ENCODE measurements at regions of chr11 and their contacts with region 1.

Region 1: DNA sequence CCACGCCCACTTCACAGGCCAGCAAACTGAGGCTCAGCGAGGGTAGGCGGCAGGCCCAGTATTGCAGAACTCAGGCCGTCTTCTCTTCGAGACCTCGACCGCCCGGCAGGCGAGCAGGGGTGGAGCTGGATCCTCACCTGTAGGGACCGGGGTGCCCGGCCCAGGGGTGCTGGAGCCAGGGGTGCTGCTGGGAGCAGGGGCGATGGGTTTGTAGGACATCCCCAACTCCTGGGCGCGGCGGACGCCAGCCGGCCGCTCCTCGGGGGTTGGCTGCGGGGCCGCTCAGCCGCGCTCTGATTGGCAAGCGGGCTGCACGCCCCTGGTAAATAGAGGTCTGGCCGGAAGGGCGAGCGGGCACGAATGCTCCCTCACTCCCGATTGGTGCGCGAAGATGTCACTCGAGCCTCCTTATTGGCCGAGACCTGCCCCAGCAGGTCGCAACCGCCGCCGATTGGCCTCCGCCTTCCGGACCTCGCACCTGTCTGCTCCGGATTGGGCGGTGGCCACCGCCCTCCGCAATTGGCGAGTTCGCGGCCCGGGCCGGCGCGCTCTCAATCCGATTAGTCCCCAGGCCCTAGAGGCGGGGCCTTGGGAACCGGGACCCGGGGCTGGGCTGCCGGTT is at the start of gene CDK2AP2:
- DNase-seq: peak; percentile 100
- ATAC-seq: peak; percentile 82
- H3K4me3 ChIP-seq: peak within 1 kb of the TSS; percentile 88
- H3K27ac ChIP-seq: peak within 1 kb of the TSS; percentile 69
- H3K4me1 ChIP-seq: peaks cover 14% of the 10 kb centered on the region
- H3K27me3 ChIP-seq: 0 out of 2 replicates have a peak, but pooled peaks cover 2% of the 10 kb centered on the region
- CTCF ChIP-seq: no peak
- POLR2A ChIP-seq: peak; percentile 28; the same call in 1 of the 2 replicates
- RAD21 ChIP-seq: no peak
- total RNA-seq, gene CDK2AP2: 8.1 and 9.2 TPM in 2 replicates

Region 2: DNA sequence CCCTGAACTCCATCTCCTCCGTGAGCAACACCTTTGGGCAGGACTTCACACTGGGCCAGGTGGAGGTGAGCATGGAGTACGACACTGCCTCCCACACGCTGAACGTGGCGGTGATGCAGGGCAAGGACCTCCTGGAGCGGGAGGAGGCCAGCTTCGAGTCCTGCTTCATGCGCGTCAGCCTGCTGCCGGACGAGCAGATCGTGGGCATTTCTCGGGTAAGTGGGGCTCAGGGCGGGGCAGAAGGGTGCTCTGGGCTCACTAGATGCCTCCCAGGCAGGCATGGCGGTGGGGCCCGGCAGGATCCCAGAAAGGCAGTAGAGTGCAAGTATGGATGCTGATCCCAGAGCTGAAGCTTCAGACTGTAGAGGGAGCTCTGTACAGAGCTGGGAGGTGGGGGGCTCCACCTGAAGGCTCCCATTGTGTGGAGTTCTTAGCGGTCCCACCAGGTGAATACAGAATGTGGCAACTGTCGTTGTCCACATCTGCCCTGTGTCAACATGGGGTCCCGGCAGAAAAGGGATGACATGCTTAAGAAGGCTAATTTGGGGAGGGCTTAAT is 467.9 kb before region 1 on chr11:
- CTCF ChIA-PET with region 1: no interaction called
- POLR2A ChIA-PET with region 1: no interaction called
- dilution Hi-C with region 1: no loop called
- in situ Hi-C with region 1: no loop called
- intact Hi-C with region 1: no loop called
- DNase-seq: no peak
- ATAC-seq: no peak
- H3K4me3 ChIP-seq: no peak overlapping the region
- H3K27ac ChIP-seq: no peak overlapping the region
- H3K4me1 ChIP-seq: peaks cover 17% of the 10 kb centered on the region
- H3K27me3 ChIP-seq: peaks cover 12% of the 10 kb centered on the region
- CTCF ChIP-seq: no peak
- POLR2A ChIP-seq: no peak
- RAD21 ChIP-seq: no peak

Region 3: DNA sequence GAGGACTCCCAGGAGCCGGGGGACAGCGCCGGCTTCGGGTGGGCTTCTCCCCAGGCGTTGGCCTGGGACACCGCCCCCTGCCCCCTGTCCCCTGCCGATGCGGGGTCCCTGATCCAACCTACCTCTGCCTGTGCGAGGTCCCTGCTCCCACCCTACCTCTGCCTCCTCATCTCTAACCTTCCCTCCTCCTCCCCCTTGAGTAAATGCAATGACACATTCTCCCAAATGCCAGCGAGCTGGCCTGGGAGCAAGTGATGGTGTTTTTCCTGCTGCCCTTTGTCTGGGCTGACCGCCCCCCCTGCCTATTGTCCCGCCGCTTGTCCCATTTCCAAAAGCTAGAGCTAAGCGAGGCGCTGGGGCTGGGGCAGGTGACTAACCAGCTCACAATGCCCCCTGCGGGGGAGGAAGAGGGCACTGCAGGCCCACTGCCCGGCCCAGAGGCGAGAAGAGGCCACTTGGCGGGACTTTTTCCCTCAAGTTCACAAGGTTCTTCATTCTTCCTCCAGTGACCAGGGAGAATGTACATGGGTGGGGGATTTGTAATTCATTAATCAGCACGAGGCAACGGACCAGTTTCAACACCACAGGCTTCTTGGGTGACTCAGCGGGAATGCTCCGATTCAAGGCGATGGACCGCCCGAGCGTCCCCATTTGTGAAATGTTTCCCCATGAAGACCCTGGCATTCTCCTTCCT is 133.9 kb before region 1 on chr11:
- CTCF ChIA-PET with region 1: no interaction called
- POLR2A ChIA-PET with region 1: no interaction called
- dilution Hi-C with region 1: no loop called
- in situ Hi-C with region 1: no loop called
- intact Hi-C with region 1: no loop called
- DNase-seq: peak; percentile 96
- ATAC-seq: peak; percentile 31
- H3K4me3 ChIP-seq: peak overlapping the region; percentile 78
- H3K27ac ChIP-seq: peak overlapping the region; percentile 94
- H3K4me1 ChIP-seq: peaks cover 43% of the 10 kb centered on the region
- H3K27me3 ChIP-seq: no peaks in the 10 kb centered on the region
- CTCF ChIP-seq: peak; percentile 44
- POLR2A ChIP-seq: peak; percentile 70
- RAD21 ChIP-seq: peak; percentile 30; the same call in 1 of the 2 replicates

Region 4: GRCh38 chr11:67401495-67402191 is 106.3 kb before region 1 on chr11 and contains the start of gene PPP1CA:
- CTCF ChIA-PET with region 1: no interaction called
- POLR2A ChIA-PET with region 1: no interaction called
- dilution Hi-C with region 1: no loop called
- in situ Hi-C with region 1: no loop called
- intact Hi-C with region 1: loop called (anchors 2 kb)
- DNase-seq: peak; percentile 79
- ATAC-seq: peak; percentile 94
- H3K4me3 ChIP-seq: peak within 1 kb of the TSS; percentile 72
- H3K27ac ChIP-seq: peak within 1 kb of the TSS; percentile 95
- H3K4me1 ChIP-seq: peaks cover 13% of the 10 kb centered on the region
- H3K27me3 ChIP-seq: no peaks in the 10 kb centered on the region
- CTCF ChIP-seq: peak; percentile 36
- POLR2A ChIP-seq: peak; percentile 85
- RAD21 ChIP-seq: peak; percentile 35
- total RNA-seq, gene PPP1CA: 294 and 313 TPM in 2 replicates

Region 5: DNA sequence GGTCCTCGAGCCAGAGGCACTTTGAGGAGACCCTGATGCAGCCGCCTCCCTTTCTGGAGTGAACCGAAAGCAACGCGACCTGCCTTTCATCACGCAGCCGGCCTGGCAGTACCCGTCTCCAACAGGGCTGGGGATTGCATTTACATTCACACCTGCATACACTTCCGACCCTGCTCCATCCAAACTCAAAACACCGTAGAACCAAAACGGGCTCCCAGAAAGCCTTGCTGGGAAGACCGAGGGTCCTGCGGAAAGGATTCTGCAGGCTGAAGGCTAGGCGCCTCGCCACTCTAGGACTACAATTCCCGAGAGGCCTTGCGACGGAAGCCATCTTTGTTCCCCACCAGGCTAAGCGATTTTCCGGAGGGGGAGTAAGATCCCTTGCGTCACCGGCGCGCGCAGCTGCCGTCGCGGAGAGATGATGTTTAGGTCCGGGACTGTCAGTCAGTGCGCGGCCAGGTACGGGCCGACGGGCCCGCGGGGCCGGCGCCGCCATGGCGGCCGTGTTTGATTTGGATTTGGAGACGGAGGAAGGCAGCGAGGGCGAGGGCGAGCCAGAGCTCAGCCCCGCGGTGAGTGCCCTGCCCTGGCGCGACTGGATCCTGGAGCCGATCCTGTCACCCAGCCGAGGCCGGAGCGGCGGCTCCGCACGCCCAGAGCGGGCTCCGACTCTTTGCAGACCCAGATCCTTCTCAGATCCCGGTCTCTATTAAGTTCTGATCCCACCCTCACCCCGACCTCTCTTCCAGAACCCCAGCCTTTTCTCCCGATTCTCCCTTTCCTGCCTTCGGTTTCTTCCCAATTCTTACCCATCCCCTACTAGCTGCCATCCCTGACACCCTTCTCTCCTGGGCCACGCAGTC is 79.7 kb before region 1 on chr11 and contains the start of gene RPS6KB2:
- CTCF ChIA-PET with region 1: no interaction called
- POLR2A ChIA-PET with region 1: no interaction called
- dilution Hi-C with region 1: no loop called
- in situ Hi-C with region 1: no loop called
- intact Hi-C with region 1: no loop called
- DNase-seq: peak; percentile 96
- ATAC-seq: peak; percentile 98
- H3K4me3 ChIP-seq: peak within 1 kb of the TSS; percentile 75
- H3K27ac ChIP-seq: peak within 1 kb of the TSS; percentile 80
- H3K4me1 ChIP-seq: peaks cover 5% of the 10 kb centered on the region
- H3K27me3 ChIP-seq: no peaks in the 10 kb centered on the region
- CTCF ChIP-seq: no peak
- POLR2A ChIP-seq: peak; percentile 83
- RAD21 ChIP-seq: peak; percentile 23; the same call in 1 of the 2 replicates
- total RNA-seq, gene RPS6KB2: 47.8 and 58.4 TPM in 2 replicates

Region 6: GRCh38 chr11:67442504-67443405 is 65.2 kb before region 1 on chr11:
- CTCF ChIA-PET with region 1: no interaction called
- POLR2A ChIA-PET with region 1: no interaction called
- dilution Hi-C with region 1: no loop called
- in situ Hi-C with region 1: no loop called
- intact Hi-C with region 1: loop called (anchors 1 kb)
- DNase-seq: no peak
- ATAC-seq: peak; percentile 27
- H3K4me3 ChIP-seq: peak overlapping the region; percentile 97
- H3K27ac ChIP-seq: peak overlapping the region; percentile 89
- H3K4me1 ChIP-seq: peaks cover 3% of the 10 kb centered on the region; the same call in 1 of the 2 replicates
- H3K27me3 ChIP-seq: no peaks in the 10 kb centered on the region
- CTCF ChIP-seq: no peak
- POLR2A ChIP-seq: no peak
- RAD21 ChIP-seq: no peak

Region 7: DNA sequence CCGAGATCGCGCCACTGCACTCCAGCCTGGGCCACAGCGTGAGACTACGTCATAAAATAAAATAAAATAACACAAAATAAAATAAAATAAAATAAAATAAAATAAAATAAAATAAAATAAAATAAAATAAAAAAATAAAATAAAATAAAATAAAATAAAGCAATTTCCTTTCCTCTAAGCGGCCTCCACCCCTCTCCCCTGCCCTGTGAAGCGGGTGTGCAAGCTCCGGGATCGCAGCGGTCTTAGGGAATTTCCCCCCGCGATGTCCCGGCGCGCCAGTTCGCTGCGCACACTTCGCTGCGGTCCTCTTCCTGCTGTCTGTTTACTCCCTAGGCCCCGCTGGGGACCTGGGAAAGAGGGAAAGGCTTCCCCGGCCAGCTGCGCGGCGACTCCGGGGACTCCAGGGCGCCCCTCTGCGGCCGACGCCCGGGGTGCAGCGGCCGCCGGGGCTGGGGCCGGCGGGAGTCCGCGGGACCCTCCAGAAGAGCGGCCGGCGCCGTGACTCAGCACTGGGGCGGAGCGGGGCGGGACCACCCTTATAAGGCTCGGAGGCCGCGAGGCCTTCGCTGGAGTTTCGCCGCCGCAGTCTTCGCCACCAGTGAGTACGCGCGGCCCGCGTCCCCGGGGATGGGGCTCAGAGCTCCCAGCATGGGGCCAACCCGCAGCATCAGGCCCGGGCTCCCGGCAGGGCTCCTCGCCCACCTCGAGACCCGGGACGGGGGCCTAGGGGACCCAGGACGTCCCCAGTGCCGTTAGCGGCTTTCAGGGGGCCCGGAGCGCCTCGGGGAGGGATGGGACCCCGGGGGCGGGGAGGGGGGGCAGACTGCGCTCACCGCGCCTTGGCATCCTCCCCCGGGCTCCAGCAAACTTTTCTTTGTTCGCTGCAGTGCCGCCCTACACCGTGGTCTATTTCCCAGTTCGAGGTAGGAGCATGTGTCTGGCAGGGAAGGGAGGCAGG is 75.6 kb after region 1 on chr11 and contains the start of gene GSTP1:
- CTCF ChIA-PET with region 1: no interaction called
- POLR2A ChIA-PET with region 1: no interaction called
- dilution Hi-C with region 1: no loop called
- in situ Hi-C with region 1: no loop called
- intact Hi-C with region 1: loop called (anchors 1 kb)
- DNase-seq: peak; percentile 88
- ATAC-seq: peak; percentile 96
- H3K4me3 ChIP-seq: peak within 1 kb of the TSS; percentile 77
- H3K27ac ChIP-seq: peak within 1 kb of the TSS; percentile 84
- H3K4me1 ChIP-seq: peaks cover 14% of the 10 kb centered on the region
- H3K27me3 ChIP-seq: peaks cover 10% of the 10 kb centered on the region; the same call in 1 of the 2 replicates
- CTCF ChIP-seq: peak; percentile 88
- POLR2A ChIP-seq: peak; percentile 98
- RAD21 ChIP-seq: peak; percentile 62
- total RNA-seq, gene GSTP1: 947 and 1,000 TPM in 2 replicates